HepG2 (cell line): ENCODE measurements at regions of chr11 and their contacts with region 1.

Region 1: DNA sequence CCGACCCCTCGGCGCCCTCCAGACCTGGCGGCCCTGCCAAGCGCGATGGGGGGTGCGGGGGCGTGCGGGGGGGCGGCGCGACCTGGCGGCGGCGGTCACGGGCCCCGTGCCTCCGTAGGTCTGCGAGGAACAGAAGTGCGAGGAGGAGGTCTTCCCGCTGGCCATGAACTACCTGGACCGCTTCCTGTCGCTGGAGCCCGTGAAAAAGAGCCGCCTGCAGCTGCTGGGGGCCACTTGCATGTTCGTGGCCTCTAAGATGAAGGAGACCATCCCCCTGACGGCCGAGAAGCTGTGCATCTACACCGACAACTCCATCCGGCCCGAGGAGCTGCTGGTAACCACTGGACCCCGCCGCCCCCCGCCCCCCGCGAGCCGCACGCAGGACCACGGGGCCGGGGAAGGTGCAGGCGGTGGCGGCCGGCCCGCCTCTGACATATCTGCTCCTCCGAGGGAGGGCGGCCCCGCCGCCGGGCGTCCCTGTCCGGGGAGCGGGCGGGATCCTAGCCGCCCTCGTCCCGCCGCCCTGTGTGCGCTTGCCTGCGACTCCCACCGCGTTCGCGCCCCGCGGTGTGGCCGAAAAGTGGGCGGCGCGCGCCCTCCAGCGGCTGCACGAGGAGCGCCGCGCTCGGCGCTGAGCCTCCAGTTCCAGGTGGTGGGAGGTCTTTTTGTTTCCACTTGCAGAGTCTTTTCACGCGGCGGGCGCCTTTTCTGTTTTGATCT is 2.1 kb downstream of the CCND1 start:
- DNase-seq: peak; percentile 50
- ATAC-seq: peak; percentile 57
- H3K4me3 ChIP-seq: peak overlapping the region; percentile 86 to 99 (median 94)
- H3K27ac ChIP-seq: peak overlapping the region; percentile 87
- H3K4me1 ChIP-seq: peaks cover 27% of the 10 kb centered on the region
- H3K27me3 ChIP-seq: peaks cover 0 to 5% of the 10 kb centered on the region in 2 experiments; a peak in 1 of 5 replicates
- CTCF ChIP-seq: peak; percentile 89
- EP300 ChIP-seq: no peak
- POLR2A ChIP-seq: no peak; a peak in 1 of 4 replicates
- RAD21 ChIP-seq: peak; percentile 98

Region 2: GRCh38 chr11:69010964-69011623 is 632.0 kb before region 1 on chr11:
- CTCF ChIA-PET with region 1: no interaction called
- POLR2A ChIA-PET with region 1: no interaction called
- in situ Hi-C with region 1: no loop called
- intact Hi-C with region 1: no loop called
- DNase-seq: no peak
- ATAC-seq: no peak
- H3K4me3 ChIP-seq: no peak overlapping the region
- H3K27ac ChIP-seq: no peak overlapping the region
- H3K4me1 ChIP-seq: peaks cover 55% of the 10 kb centered on the region
- H3K27me3 ChIP-seq: peaks cover 20 to 46% of the 10 kb centered on the region in 2 experiments
- CTCF ChIP-seq: no peak
- EP300 ChIP-seq: no peak
- POLR2A ChIP-seq: no peak
- RAD21 ChIP-seq: no peak

Region 3: DNA sequence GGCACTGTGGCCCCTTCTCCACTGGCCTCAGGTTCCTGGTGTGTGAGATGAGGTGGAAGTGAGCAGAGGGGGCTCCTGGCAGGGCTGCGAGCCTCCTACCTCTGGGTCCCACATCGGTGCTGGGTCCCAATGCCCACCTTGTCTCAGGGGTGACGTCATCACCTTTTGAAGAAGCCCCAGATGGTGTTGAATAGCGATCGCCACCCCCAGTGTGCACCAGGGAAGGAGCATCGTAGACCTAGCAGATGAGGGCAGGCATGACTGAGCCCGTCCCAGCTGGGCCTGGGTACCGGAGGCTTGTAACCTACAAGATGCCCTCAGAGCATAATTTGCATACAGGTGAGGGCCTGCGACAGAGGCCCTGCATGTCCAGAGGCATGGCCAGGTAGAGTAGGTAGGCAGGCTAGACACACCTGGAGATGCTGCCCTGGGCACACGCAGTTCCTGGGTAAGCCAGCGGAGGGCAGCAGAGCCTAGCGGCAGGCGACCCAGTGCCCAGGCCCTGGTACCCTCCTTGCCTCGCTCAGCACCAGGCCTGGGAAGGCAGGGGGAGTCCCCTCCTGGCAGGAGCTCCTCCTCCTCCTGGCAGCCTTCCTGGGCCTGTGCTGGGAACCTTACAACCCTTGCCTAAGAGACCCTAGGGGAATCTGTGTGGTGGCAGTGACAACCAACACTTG is 541.8 kb before region 1 on chr11:
- CTCF ChIA-PET with region 1: interaction called, 22 read pairs
- POLR2A ChIA-PET with region 1: interaction called, 3 read pairs
- in situ Hi-C with region 1: no loop called
- intact Hi-C with region 1: loop called (anchors 10 kb)
- DNase-seq: peak; percentile 37
- ATAC-seq: peak; percentile 85
- H3K4me3 ChIP-seq: no peak overlapping the region
- H3K27ac ChIP-seq: no peak overlapping the region
- H3K4me1 ChIP-seq: no peaks in the 10 kb centered on the region
- H3K27me3 ChIP-seq: peaks cover 0 to 26% of the 10 kb centered on the region in 2 experiments; a peak in 3 of 5 replicates
- CTCF ChIP-seq: peak; percentile 98
- EP300 ChIP-seq: no peak
- POLR2A ChIP-seq: no peak
- RAD21 ChIP-seq: peak; percentile 98

Region 4: DNA sequence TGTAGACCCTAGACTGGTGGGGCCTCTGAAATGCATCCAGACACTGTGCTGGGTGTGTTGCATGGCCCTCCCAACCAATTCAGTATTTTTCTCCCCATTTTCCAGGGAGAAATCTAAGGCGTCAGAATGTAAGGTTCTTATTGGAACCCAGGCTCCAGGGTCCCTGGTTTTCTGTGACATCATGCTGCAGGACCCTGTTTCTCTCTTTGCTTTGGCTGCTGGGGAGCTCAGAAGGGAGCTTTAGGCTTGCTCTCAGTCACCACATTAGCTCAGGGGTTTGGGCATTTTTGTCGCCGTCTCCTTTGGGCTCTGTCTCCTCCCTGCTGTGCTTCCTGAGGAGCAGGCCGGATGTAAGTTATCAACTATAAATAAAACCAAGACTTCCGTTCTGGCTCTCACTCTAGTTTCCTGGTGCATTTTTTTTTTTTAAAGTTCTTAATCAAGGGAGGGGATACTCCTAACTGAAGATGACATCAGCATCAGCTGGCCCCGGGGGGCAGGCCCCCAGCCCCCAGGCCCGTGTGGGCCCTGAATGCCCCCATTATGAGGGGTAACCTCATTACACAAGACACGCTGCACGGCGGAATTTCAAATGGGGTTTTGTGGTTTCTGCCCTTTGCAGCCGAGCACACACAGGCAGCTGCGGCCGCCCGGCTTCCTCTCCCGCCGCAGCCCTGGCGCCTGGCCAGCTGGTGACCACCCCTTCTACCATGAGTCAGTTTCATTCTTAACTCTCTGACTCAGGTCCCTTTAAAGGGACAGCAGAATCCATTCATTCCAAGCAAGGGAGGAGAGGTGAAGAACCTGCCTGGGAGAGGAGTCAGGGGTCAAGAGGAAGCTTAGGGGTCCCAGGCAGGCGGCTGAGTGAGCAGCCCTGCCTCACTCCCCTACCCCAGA is 345.9 kb before region 1 on chr11:
- CTCF ChIA-PET with region 1: interaction called, 3 read pairs
- POLR2A ChIA-PET with region 1: interaction called, 6 read pairs
- in situ Hi-C with region 1: loop called (anchors 5 kb)
- intact Hi-C with region 1: loop called (anchors 2 kb)
- DNase-seq: peak; percentile 89
- ATAC-seq: peak; percentile 63
- H3K4me3 ChIP-seq: peak overlapping the region in 2 of 3 experiments; percentile 18 to 60; a peak in 3 of 6 replicates
- H3K27ac ChIP-seq: peak overlapping the region; percentile 25
- H3K4me1 ChIP-seq: peaks cover 51% of the 10 kb centered on the region
- H3K27me3 ChIP-seq: no peaks in the 10 kb centered on the region
- CTCF ChIP-seq: no peak
- EP300 ChIP-seq: peak in 1 of 2 experiments; percentile 64; a peak in 1 of 4 replicates
- POLR2A ChIP-seq: no peak
- RAD21 ChIP-seq: no peak

Region 5: DNA sequence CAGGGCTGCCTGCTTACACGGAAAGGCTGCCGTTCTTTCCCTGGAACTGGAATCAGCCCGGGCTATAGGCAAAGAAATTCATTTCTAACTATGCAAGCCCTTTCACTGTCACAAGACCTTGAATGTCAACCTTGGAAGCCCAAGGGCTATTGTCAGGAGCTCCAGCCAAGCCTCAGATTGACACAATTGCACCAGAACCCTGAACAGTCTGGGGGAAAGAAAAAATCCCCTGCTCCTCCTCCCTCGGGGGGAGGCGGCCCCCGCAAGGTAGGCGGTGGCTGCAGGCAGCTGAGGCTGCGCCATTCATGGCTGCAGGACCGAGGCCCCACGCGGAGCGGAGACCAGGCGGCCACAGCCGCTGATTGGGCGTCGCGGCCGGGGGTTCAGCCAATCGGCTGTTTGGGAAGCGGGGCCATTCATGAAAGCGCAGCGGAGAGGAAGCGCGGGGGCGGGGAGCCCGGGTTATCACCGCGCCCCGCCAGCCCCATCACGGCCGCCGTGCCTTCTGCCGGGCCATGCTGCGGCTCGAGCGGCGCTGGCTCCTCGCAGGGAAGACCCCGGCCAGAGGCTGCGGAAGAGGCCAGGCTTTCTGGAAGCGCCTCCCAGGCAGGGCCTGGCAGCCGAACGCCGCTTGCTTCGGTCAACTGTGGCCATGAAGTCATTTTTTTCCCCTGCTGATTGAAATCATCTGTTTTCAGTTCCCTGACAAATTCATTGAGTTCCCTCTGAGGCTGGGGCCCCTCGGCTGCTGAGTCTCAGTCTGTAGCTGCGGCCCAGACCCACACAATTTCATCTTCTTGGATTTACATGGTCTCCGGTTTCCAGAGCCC is 199.7 kb before region 1 on chr11:
- CTCF ChIA-PET with region 1: no interaction called
- POLR2A ChIA-PET with region 1: no interaction called
- in situ Hi-C with region 1: loop called (anchors 25 kb)
- intact Hi-C with region 1: loop called (anchors 5 kb)
- DNase-seq: no peak
- ATAC-seq: no peak
- H3K4me3 ChIP-seq: no peak overlapping the region
- H3K27ac ChIP-seq: peak overlapping the region; percentile 57
- H3K4me1 ChIP-seq: peaks cover 52% of the 10 kb centered on the region
- H3K27me3 ChIP-seq: no peaks in the 10 kb centered on the region
- CTCF ChIP-seq: no peak
- EP300 ChIP-seq: no peak
- POLR2A ChIP-seq: no peak
- RAD21 ChIP-seq: no peak

Region 6: DNA sequence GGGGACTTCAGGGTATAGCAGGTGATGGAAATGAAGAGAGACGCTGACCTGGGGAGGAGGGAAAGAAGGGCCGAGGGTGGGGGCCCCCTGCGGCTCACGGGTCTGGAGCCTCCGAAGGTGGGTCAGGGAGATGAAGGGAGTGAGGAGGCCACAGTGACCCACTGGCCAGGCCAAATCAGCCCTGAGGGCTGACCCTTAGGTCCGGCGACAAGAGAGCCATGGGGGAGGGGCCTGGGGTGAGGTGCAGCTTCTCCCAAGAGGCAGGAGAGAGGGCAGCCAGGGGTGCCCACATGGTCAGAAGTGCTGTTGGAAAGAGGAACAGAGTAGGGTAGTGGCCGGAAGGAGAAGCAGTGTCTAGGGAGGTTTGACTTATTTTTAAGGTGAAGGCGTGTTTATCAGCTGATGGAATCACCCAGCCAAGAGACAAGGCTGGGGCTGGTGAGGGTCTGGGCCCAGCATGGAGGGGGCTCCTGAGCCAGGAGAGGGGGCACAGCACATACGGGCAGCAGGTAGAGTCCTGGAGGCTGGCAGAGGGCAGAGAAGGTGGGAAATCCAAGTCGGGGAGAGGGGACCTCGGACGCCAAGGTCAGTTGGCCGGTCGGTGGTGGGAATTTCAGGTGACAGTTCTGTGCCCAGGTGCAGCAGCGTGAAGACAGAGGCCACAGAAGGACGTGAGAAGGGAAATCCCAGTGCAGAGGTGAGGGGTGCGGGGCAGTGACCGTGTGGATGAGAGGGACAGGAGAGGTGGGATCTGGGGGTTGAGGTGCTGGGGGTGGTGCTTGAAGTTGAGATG is 112.6 kb before region 1 on chr11:
- CTCF ChIA-PET with region 1: no interaction called
- POLR2A ChIA-PET with region 1: no interaction called
- in situ Hi-C with region 1: no loop called
- intact Hi-C with region 1: no loop called
- DNase-seq: no peak
- ATAC-seq: no peak
- H3K4me3 ChIP-seq: no peak overlapping the region
- H3K27ac ChIP-seq: no peak overlapping the region
- H3K4me1 ChIP-seq: no peaks in the 10 kb centered on the region
- H3K27me3 ChIP-seq: peaks cover 4 to 45% of the 10 kb centered on the region in 2 experiments; a peak in 3 of 5 replicates
- CTCF ChIP-seq: no peak
- EP300 ChIP-seq: no peak
- POLR2A ChIP-seq: no peak
- RAD21 ChIP-seq: no peak

Region 7: GRCh38 chr11:69576069-69576782 is 66.8 kb before region 1 on chr11:
- CTCF ChIA-PET with region 1: no interaction called
- POLR2A ChIA-PET with region 1: no interaction called
- in situ Hi-C with region 1: no loop called
- intact Hi-C with region 1: loop called (anchors 5 kb)
- DNase-seq: no peak
- ATAC-seq: peak; percentile 55; the same call in 2 of the 3 replicates
- H3K4me3 ChIP-seq: peak overlapping the region in 1 of 3 experiments; percentile 17; a peak in 2 of 6 replicates
- H3K27ac ChIP-seq: no peak overlapping the region
- H3K4me1 ChIP-seq: peaks cover 34% of the 10 kb centered on the region
- H3K27me3 ChIP-seq: peaks cover 6 to 42% of the 10 kb centered on the region in 2 experiments; a peak in 4 of 5 replicates
- CTCF ChIP-seq: no peak
- EP300 ChIP-seq: no peak
- POLR2A ChIP-seq: no peak
- RAD21 ChIP-seq: no peak

Region 8: GRCh38 chr11:69670158-69670845 is 27.2 kb after region 1 on chr11:
- CTCF ChIA-PET with region 1: interaction called, 26 read pairs
- POLR2A ChIA-PET with region 1: interaction called, 30 read pairs
- in situ Hi-C with region 1: no loop called
- intact Hi-C with region 1: loop called (anchors 1 kb)
- DNase-seq: peak; percentile 77
- ATAC-seq: peak; percentile 52
- H3K4me3 ChIP-seq: 0 out of 6 replicates have a peak overlapping the region, but pooled peaks of 2 of the 3 experiments have one; percentile 13 to 18
- H3K27ac ChIP-seq: peak overlapping the region; percentile 39
- H3K4me1 ChIP-seq: peaks cover 58% of the 10 kb centered on the region
- H3K27me3 ChIP-seq: no peaks in the 10 kb centered on the region
- CTCF ChIP-seq: peak; percentile 96
- EP300 ChIP-seq: no peak
- POLR2A ChIP-seq: no peak
- RAD21 ChIP-seq: peak; percentile 95

Region 9: DNA sequence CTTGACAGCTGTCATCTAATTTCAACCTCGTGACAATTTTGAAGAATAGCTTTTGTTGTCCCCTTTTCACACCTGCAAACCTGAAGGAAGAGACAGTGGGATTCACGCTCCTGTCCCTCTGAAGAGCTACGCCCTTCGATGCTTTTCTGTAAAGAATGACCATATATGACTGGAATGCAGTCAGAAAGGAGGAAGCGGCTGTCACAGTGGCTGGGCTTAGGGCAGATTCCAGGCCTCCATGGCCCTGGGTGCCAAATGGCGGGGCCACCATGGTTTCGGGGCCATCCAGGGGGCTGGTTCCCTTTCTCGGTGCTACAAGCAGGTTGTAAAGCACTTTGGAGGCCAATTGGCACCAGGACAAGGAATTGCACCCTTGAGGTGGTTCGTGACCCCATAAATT is 82.9 kb after region 1 on chr11:
- CTCF ChIA-PET with region 1: no interaction called
- POLR2A ChIA-PET with region 1: no interaction called
- in situ Hi-C with region 1: no loop called
- intact Hi-C with region 1: no loop called
- DNase-seq: no peak
- ATAC-seq: no peak
- H3K4me3 ChIP-seq: no peak overlapping the region
- H3K27ac ChIP-seq: no peak overlapping the region
- H3K4me1 ChIP-seq: no peaks in the 10 kb centered on the region
- H3K27me3 ChIP-seq: peaks cover 5 to 59% of the 10 kb centered on the region in 2 experiments
- CTCF ChIP-seq: no peak
- EP300 ChIP-seq: no peak
- POLR2A ChIP-seq: no peak
- RAD21 ChIP-seq: no peak

Region 10: GRCh38 chr11:69791276-69792180 is 148.5 kb after region 1 on chr11:
- CTCF ChIA-PET with region 1: no interaction called
- POLR2A ChIA-PET with region 1: no interaction called
- in situ Hi-C with region 1: no loop called
- intact Hi-C with region 1: no loop called
- DNase-seq: no peak
- ATAC-seq: no peak
- H3K4me3 ChIP-seq: no peak overlapping the region
- H3K27ac ChIP-seq: no peak overlapping the region
- H3K4me1 ChIP-seq: no peaks in the 10 kb centered on the region
- H3K27me3 ChIP-seq: peaks cover 6 to 44% of the 10 kb centered on the region in 2 experiments; a peak in 4 of 5 replicates
- CTCF ChIP-seq: no peak
- EP300 ChIP-seq: no peak
- POLR2A ChIP-seq: no peak
- RAD21 ChIP-seq: no peak